ENCODE measurements at regions of chr17 and their contacts with region 1.

Region 1: GRCh38 chr17:43940630-43941029 is 1.6 kb downstream of the PPY start:
- DNase-seq: peak in 1 of 2 experiments; percentile 83
- H3K4me3 ChIP-seq: no peak overlapping the region
- H3K27ac ChIP-seq: no peak overlapping the region
- H3K4me1 ChIP-seq: peaks cover 0 to 10% (median 5%) of the 10 kb centered on the region in 4 experiments; a peak in 6 of 7 replicates
- H3K27me3 ChIP-seq: peaks cover 1 to 29% (median 21%) of the 10 kb centered on the region in 4 experiments
- CTCF ChIP-seq: peak; percentile 72 to 83 (median 75)
- EP300 ChIP-seq: no peak
- POLR2A ChIP-seq: no peak
- RAD21 ChIP-seq: peak; percentile 59 to 74

Region 2: GRCh38 chr17:43861024-43861621 is 79.5 kb before region 1 on chr17:
- CTCF ChIA-PET with region 1: no interaction called
- POLR2A ChIA-PET with region 1: no interaction called
- DNase-seq: no peak
- H3K4me3 ChIP-seq: no peak overlapping the region
- H3K27ac ChIP-seq: no peak overlapping the region
- H3K4me1 ChIP-seq: peaks cover 0 to 4% (median under 1%) of the 10 kb centered on the region in 4 experiments; a peak in 3 of 7 replicates
- H3K27me3 ChIP-seq: no peaks in the 10 kb centered on the region
- CTCF ChIP-seq: no peak
- EP300 ChIP-seq: no peak
- POLR2A ChIP-seq: no peak
- RAD21 ChIP-seq: no peak

Region 3: GRCh38 chr17:43907425-43907981 is 33.1 kb before region 1 on chr17 and contains the start of gene MPP2:
- CTCF ChIA-PET with region 1: interaction called, 45 read pairs
- POLR2A ChIA-PET with region 1: no interaction called
- DNase-seq: peak in 1 of 2 experiments; percentile 91
- H3K4me3 ChIP-seq: peak within 1 kb of the TSS; percentile 42 to 81 (median 68)
- H3K27ac ChIP-seq: no peak within 1 kb of the TSS
- H3K4me1 ChIP-seq: peaks cover 4 to 23% (median 19%) of the 10 kb centered on the region in 4 experiments
- H3K27me3 ChIP-seq: peaks cover 0 to 21% (median 15%) of the 10 kb centered on the region in 4 experiments; a peak in 5 of 7 replicates
- CTCF ChIP-seq: no peak
- EP300 ChIP-seq: no peak
- POLR2A ChIP-seq: no peak
- RAD21 ChIP-seq: no peak
- total RNA-seq, gene MPP2: 30.9 and 31.6 TPM in 2 replicates

Region 4: GRCh38 chr17:43927060-43927864 is 13.4 kb before region 1 on chr17:
- CTCF ChIA-PET with region 1: interaction called, 106 read pairs
- POLR2A ChIA-PET with region 1: interaction called, 3 read pairs
- DNase-seq: no peak
- H3K4me3 ChIP-seq: peak overlapping the region; percentile 10 to 55 (median 34); a peak in 5 of 8 replicates
- H3K27ac ChIP-seq: no peak overlapping the region
- H3K4me1 ChIP-seq: peaks cover 0 to 7% (median 0%) of the 10 kb centered on the region in 4 experiments; a peak in 1 of 7 replicates
- H3K27me3 ChIP-seq: peaks cover 3 to 28% (median 15%) of the 10 kb centered on the region in 4 experiments
- CTCF ChIP-seq: no peak
- EP300 ChIP-seq: no peak
- POLR2A ChIP-seq: no peak
- RAD21 ChIP-seq: no peak

Region 5: DNA sequence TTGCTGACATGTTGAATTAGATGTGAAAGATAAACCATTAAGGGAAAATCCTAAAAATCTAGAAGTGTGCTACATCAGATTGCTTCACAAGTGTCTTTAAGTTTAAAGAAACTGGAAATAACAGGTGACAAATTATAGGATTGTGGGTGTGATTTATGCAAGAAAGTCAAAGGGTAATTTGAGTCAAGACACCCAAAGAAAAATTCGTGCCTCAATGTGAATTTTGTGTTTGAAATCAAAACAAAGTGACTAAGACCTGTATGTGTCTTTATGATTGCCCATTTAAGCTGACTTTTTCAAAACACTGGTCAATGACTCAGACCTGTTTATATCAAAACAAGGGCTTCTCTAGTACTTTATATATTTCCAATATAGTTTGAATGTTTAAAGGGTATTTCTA is 18.3 kb after region 1 on chr17:
- CTCF ChIA-PET with region 1: interaction called, 14 read pairs
- POLR2A ChIA-PET with region 1: interaction called, 10 read pairs
- DNase-seq: no peak
- H3K4me3 ChIP-seq: no peak overlapping the region
- H3K27ac ChIP-seq: no peak overlapping the region
- H3K4me1 ChIP-seq: peaks cover 0 to 1% (median 0%) of the 10 kb centered on the region in 4 experiments; a peak in 1 of 7 replicates
- H3K27me3 ChIP-seq: peaks cover 0 to 7% (median 7%) of the 10 kb centered on the region in 4 experiments; a peak in 4 of 7 replicates
- CTCF ChIP-seq: no peak
- EP300 ChIP-seq: no peak
- POLR2A ChIP-seq: no peak
- RAD21 ChIP-seq: no peak

Region 6: DNA sequence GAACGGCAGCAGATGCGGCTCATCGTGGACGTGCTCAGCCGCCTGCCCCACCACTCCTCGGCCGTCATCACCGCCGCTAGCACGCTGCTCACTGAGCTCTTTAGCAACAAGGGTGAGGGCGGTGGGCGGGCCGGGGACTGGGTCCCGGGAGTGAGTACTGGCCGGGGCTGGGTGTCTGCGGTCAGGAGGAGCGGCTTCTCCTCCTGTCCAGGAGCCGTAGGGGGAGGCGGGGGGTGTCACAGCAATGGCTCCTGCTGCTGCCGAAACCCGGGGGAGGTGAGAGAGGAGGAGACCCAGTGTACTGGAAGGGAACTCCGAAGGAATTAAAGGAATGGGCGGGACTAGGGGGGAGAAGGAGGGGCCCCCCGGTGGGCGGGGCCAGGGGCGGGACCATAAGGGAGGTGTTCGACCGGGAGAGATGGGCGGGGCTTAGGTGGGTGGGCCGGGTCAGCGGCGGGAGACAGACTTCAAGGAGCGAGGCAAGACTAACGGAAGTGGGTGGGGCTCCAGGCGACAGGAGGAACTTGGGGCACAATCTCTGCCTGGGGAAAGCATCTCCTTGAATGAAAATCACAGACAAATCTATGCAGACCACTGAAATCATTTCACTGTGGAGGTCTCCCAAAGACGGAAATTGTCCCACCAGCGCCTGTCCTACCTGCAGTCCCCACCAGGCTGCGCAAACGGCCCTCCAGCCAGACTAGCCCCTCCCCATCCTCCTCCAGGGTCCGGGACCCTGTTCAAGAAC is 66.1 kb after region 1 on chr17:
- CTCF ChIA-PET with region 1: interaction called, 416 read pairs
- POLR2A ChIA-PET with region 1: interaction called, 7 read pairs
- DNase-seq: peak; percentile 94 to 98
- H3K4me3 ChIP-seq: peak overlapping the region; percentile 72 to 86 (median 82)
- H3K27ac ChIP-seq: no peak overlapping the region
- H3K4me1 ChIP-seq: peaks cover 0 to 19% (median 13%) of the 10 kb centered on the region in 4 experiments; a peak in 6 of 7 replicates
- H3K27me3 ChIP-seq: peaks cover 0 to 21% (median 17%) of the 10 kb centered on the region in 4 experiments; a peak in 6 of 7 replicates
- CTCF ChIP-seq: peak; percentile 61 to 78 (median 76)
- EP300 ChIP-seq: no peak
- POLR2A ChIP-seq: no peak; a peak in 1 of 3 replicates
- RAD21 ChIP-seq: peak; percentile 42 to 55; a peak in 3 of 4 replicates

Region 7: GRCh38 chr17:44132275-44132821 is 191.7 kb after region 1 on chr17:
- CTCF ChIA-PET with region 1: no interaction called
- POLR2A ChIA-PET with region 1: no interaction called
- DNase-seq: no peak
- H3K4me3 ChIP-seq: no peak overlapping the region
- H3K27ac ChIP-seq: no peak overlapping the region
- H3K4me1 ChIP-seq: peaks cover 0 to under 1% (median 0%) of the 10 kb centered on the region in 4 experiments; a peak in 1 of 7 replicates
- H3K27me3 ChIP-seq: no peaks in the 10 kb centered on the region
- CTCF ChIP-seq: no peak
- EP300 ChIP-seq: no peak
- POLR2A ChIP-seq: no peak
- RAD21 ChIP-seq: no peak

Measured in H1 (cell line).